Naive thymus-derived CD4-positive, alpha-beta T cell (primary cell): ENCODE measurements at regions of chr6 and their contacts with region 1.

Region 1: GRCh38 chr6:73653571-73654424 is at the start of gene SLC17A5:
- DNase-seq: peak; percentile 76 to 89 (median 82)
- ATAC-seq: peak; percentile 95
- H3K4me3 ChIP-seq: peak within 1 kb of the TSS; percentile 99
- H3K4me3 Mint-ChIP-seq: peak within 1 kb of the TSS; percentile 95 to 100 (median 98)
- H3K27ac ChIP-seq: peak within 1 kb of the TSS; percentile 99
- H3K27ac Mint-ChIP-seq: peak within 1 kb of the TSS; percentile 90 to 99 (median 97)
- H3K4me1 ChIP-seq: peaks cover 10 to 13% of the 10 kb centered on the region in 2 donors
- H3K4me1 Mint-ChIP-seq: peaks cover 17 to 42% (median 37%) of the 10 kb centered on the region in 7 donors
- H3K27me3 ChIP-seq: no peaks in the 10 kb centered on the region
- H3K27me3 Mint-ChIP-seq: no peaks in the 10 kb centered on the region
- total RNA-seq, gene SLC17A5: 6.0 to 13.8 (median 8.9) TPM

Region 2: GRCh38 chr6:73451223-73452107 is 202.3 kb before region 1 on chr6:
- CTCF ChIA-PET with region 1: no interaction called
- POLR2A ChIA-PET with region 1: interaction called, 5 read pairs
- intact Hi-C with region 1: loop called in 1 of 2 experiments (anchors 2 kb)
- DNase-seq: peak; percentile 22 to 53 (median 38)
- ATAC-seq: peak; percentile 61
- H3K4me3 ChIP-seq: peak overlapping the region; percentile 73
- H3K4me3 Mint-ChIP-seq: peak overlapping the region; percentile 87 to 96 (median 90)
- H3K27ac ChIP-seq: peak overlapping the region; percentile 79
- H3K27ac Mint-ChIP-seq: peak overlapping the region; percentile 65 to 93 (median 79)
- H3K4me1 ChIP-seq: peaks cover 4 to 5% of the 10 kb centered on the region in 2 donors
- H3K4me1 Mint-ChIP-seq: peaks cover 17 to 35% (median 27%) of the 10 kb centered on the region in 7 donors
- H3K27me3 ChIP-seq: no peaks in the 10 kb centered on the region
- H3K27me3 Mint-ChIP-seq: no peaks in the 10 kb centered on the region

Region 3: GRCh38 chr6:73520688-73521350 is 133.0 kb before region 1 on chr6 and contains the start of gene EEF1A1:
- CTCF ChIA-PET with region 1: interaction called, 4 read pairs
- POLR2A ChIA-PET with region 1: interaction called, 92 read pairs
- intact Hi-C with region 1: loop called (anchors 1 kb)
- DNase-seq: peak; percentile 91 to 100 (median 99)
- ATAC-seq: peak; percentile 90
- H3K4me3 ChIP-seq: peak within 1 kb of the TSS; percentile 98
- H3K4me3 Mint-ChIP-seq: peak within 1 kb of the TSS; percentile 89 to 99 (median 94)
- H3K27ac ChIP-seq: peak within 1 kb of the TSS; percentile 98
- H3K27ac Mint-ChIP-seq: peak within 1 kb of the TSS; percentile 94 to 99 (median 97)
- H3K4me1 ChIP-seq: peaks cover 42 to 47% of the 10 kb centered on the region in 2 donors
- H3K4me1 Mint-ChIP-seq: peaks cover 16 to 72% (median 58%) of the 10 kb centered on the region in 7 donors
- H3K27me3 ChIP-seq: no peaks in the 10 kb centered on the region
- H3K27me3 Mint-ChIP-seq: peaks cover 0 to 10% (median 0%) of the 10 kb centered on the region in 5 donors
- total RNA-seq, gene EEF1A1: 8,219 to 15,585 (median 15,428) TPM

Region 4: DNA sequence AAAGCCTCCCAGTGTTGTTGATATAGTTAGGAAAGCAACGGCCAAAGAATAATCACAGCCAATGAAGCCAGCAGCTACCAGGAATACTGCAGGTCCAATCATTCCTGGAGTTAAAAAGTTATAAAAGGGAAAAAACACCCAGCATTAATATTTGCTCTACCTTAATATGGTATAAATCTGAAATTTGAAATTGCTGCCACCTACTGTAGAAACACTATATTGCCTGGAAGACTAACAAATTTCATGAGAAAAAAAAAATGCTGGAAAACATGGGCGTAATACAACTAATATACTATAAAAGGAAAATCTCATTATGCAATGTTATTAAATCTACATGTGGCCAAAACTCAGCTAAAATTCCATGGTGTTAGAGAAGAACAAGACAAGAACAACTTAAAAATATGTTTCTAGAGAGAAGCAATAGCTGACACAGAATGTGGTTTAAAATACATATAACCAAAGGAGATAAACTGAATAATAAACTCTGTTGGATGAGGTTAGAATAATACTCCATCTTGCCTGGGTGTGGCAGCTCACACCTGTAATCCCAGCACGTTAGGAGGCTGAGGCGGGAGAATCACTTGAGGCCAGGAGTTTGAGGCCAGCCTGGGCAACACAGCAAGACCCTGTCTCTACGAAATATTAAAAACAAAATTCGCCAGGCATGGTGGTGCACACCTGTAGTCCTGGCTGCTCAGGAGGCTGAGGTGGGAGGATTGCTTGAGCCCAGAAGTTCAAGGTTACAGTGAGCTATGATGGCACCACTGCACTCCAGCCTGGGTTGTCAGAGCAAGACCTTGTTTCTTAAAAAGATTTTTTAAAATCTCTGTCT is 43.1 kb before region 1 on chr6:
- CTCF ChIA-PET with region 1: interaction called, 6 read pairs
- POLR2A ChIA-PET with region 1: interaction called, 5 read pairs
- intact Hi-C with region 1: loop called (anchors 2 kb)
- DNase-seq: peak in 7 of 9 donors; percentile 25 to 66 (median 58)
- ATAC-seq: peak; percentile 80
- H3K4me3 ChIP-seq: no peak overlapping the region
- H3K4me3 Mint-ChIP-seq: no peak overlapping the region
- H3K27ac ChIP-seq: no peak overlapping the region
- H3K27ac Mint-ChIP-seq: peak overlapping the region in 4 of 9 donors; percentile 12 to 56 (median 29)
- H3K4me1 ChIP-seq: no peaks in the 10 kb centered on the region
- H3K4me1 Mint-ChIP-seq: peaks cover 4 to 6% (median 5%) of the 10 kb centered on the region in 7 donors
- H3K27me3 ChIP-seq: no peaks in the 10 kb centered on the region
- H3K27me3 Mint-ChIP-seq: no peaks in the 10 kb centered on the region

Region 5: GRCh38 chr6:73695619-73696421 is 42.0 kb after region 1 on chr6 and contains the start of gene CD109:
- CTCF ChIA-PET with region 1: no interaction called
- POLR2A ChIA-PET with region 1: interaction called, 3 read pairs
- intact Hi-C with region 1: loop called in 1 of 2 experiments (anchors 1 kb)
- DNase-seq: peak; percentile 15 to 81 (median 48)
- ATAC-seq: peak; percentile 75
- H3K4me3 ChIP-seq: peak within 1 kb of the TSS; percentile 61
- H3K4me3 Mint-ChIP-seq: peak within 1 kb of the TSS; percentile 84 to 94 (median 90)
- H3K27ac ChIP-seq: peak within 1 kb of the TSS; percentile 49
- H3K27ac Mint-ChIP-seq: peak within 1 kb of the TSS; percentile 23 to 94 (median 87)
- H3K4me1 ChIP-seq: peaks cover 0 to 6% of the 10 kb centered on the region in 2 donors
- H3K4me1 Mint-ChIP-seq: peaks cover 5 to 43% (median 25%) of the 10 kb centered on the region in 7 donors
- H3K27me3 ChIP-seq: no peaks in the 10 kb centered on the region
- H3K27me3 Mint-ChIP-seq: peaks cover 0 to 33% (median 24%) of the 10 kb centered on the region in 5 donors
- total RNA-seq, gene CD109: 0.54 to 12.3 (median 1.2) TPM

Region 6: DNA sequence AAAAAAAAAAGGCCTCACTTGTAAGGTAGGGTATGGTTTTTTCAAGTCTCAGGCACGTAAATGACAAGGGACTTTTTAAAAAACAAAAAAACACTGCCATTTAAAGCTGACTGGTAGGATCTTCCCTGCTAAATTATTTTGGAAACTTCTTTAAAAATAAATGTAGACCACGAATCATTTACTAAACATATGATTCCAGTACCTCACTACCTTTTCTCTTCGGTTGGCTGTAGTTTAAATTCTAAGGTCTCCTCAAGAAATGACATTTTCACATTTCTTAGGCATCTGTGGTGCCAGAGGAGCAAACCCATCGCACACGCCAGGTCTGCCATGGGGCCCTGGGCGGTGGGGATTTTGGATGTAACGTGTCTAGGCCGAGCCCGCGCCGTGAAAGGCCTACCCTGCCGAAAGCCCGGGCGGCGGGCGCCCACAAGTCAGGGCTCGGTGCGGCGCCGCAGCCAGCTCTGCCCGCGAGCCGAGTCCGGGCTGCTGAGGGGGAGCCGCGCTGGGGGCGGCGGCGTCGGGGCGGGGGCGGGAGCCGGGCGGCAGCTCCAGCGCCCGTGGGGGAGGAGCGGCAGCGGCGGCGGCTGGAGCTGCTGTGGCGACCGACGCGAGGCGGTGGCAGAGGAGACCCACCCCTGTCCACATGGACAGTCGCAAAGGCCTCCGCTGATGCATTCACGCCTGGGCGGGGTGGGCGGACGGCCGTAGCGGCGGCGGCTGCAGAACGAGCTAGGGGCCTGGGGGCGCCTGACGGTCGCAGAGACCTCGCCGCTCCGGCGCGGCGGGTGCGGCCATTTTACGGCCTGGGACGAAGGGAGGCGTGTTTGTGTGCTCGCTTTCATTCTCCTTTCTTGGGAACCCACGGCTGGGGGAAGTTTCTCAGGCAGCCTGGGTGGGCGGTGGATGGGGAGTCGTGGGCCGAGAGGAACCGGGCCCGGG is 1947.8 kb after region 1 on chr6 and contains the start of gene SENP6:
- CTCF ChIA-PET with region 1: no interaction called
- POLR2A ChIA-PET with region 1: interaction called, 13 read pairs
- intact Hi-C with region 1: loop called (anchors 1 to 5 kb)
- DNase-seq: peak; percentile 68 to 81 (median 79)
- ATAC-seq: peak; percentile 80
- H3K4me3 ChIP-seq: peak within 1 kb of the TSS; percentile 87
- H3K4me3 Mint-ChIP-seq: peak within 1 kb of the TSS; percentile 78 to 100 (median 99)
- H3K27ac ChIP-seq: peak within 1 kb of the TSS; percentile 97
- H3K27ac Mint-ChIP-seq: peak within 1 kb of the TSS; percentile 97 to 99 (median 98)
- H3K4me1 ChIP-seq: peaks cover 26 to 37% of the 10 kb centered on the region in 2 donors
- H3K4me1 Mint-ChIP-seq: peaks cover 44 to 80% (median 72%) of the 10 kb centered on the region in 7 donors
- H3K27me3 ChIP-seq: no peaks in the 10 kb centered on the region
- H3K27me3 Mint-ChIP-seq: no peaks in the 10 kb centered on the region
- total RNA-seq, gene SENP6: 77.9 to 132 (median 124) TPM